A673 (cell line): ENCODE measurements at regions of chr15 and their contacts with region 1.

Region 1: DNA sequence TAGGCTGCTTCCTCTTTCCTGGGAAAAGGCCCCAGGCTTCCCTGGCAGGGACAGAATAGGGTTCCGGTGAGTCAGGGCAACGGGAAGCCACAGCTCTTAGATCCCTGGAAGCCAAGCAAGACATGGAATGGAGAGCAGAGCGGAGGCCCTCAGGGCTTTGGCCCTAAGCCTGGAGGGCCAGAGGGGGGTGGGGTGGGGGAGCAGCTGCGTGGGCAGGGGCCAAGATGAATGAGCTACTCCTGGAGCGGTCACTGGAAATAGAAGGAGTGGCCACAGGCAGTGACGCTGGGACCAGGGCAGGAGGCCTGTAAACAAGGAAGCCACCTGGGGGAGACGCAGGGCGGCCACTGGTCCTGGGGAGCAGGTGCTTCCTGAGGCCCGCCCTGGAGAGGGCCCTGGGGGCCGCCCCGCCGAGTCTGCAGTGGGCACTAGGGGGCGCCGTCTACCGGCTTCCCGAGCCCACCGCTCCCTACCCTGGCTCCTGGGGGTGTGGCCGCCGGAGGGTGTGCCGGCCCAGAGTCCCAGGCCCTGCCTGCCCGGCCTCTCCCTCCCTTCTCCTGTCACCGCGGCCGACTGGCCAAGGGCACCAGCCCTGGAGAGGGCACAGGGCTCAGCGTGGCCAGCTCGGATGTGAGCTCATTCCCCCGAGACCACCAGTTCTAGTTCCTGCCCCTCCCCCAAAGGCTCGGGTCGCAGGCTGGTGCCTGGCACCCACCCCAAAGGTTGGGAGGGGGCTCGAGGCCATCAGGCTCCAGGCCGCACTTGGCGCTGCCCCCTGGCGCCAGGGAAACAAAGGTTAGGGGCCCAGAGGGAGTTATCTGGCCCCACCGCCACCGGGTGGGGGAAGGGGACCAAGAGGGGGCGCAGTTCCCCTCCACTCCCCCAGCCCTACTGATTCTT is 12.1 kb downstream of the VPS18 start:
- DNase-seq: peak; percentile 83
- H3K4me3 ChIP-seq: peak overlapping the region; percentile 58
- H3K27ac ChIP-seq: peak overlapping the region; percentile 57
- H3K4me1 ChIP-seq: peaks cover 21% of the 10 kb centered on the region
- H3K27me3 ChIP-seq: no peaks in the 10 kb centered on the region
- CTCF ChIP-seq: peak; percentile 86

Region 2: GRCh38 chr15:40564591-40565332 is 341.6 kb before region 1 on chr15 and contains the start of gene CCDC32:
- CTCF ChIA-PET with region 1: no interaction called
- POLR2A ChIA-PET with region 1: no interaction called
- intact Hi-C with region 1: no loop called
- DNase-seq: peak; percentile 100
- H3K4me3 ChIP-seq: peak within 1 kb of the TSS; percentile 79
- H3K27ac ChIP-seq: peak within 1 kb of the TSS; percentile 83
- H3K4me1 ChIP-seq: peaks cover 10% of the 10 kb centered on the region
- H3K27me3 ChIP-seq: no peaks in the 10 kb centered on the region
- CTCF ChIP-seq: no peak
- total RNA-seq, gene CCDC32: 10.4 and 11.7 TPM in 2 replicates

Region 3: GRCh38 chr15:40893733-40894688 is 12.3 kb before region 1 on chr15 and contains the start of gene VPS18:
- CTCF ChIA-PET with region 1: interaction called, 12 read pairs
- POLR2A ChIA-PET with region 1: no interaction called
- intact Hi-C with region 1: no loop called
- DNase-seq: peak; percentile 98
- H3K4me3 ChIP-seq: peak within 1 kb of the TSS; percentile 95
- H3K27ac ChIP-seq: peak within 1 kb of the TSS; percentile 79
- H3K4me1 ChIP-seq: peaks cover 6% of the 10 kb centered on the region
- H3K27me3 ChIP-seq: no peaks in the 10 kb centered on the region
- CTCF ChIP-seq: peak; percentile 87
- total RNA-seq, gene VPS18: 21.9 and 23.8 TPM in 2 replicates

Region 4: GRCh38 chr15:40930430-40931299 is 24.3 kb after region 1 on chr15:
- CTCF ChIA-PET with region 1: interaction called, 13 read pairs
- POLR2A ChIA-PET with region 1: no interaction called
- intact Hi-C with region 1: no loop called
- DNase-seq: no peak
- H3K4me3 ChIP-seq: peak overlapping the region; percentile 38
- H3K27ac ChIP-seq: no peak overlapping the region
- H3K4me1 ChIP-seq: peaks cover 48% of the 10 kb centered on the region
- H3K27me3 ChIP-seq: peaks cover 56% of the 10 kb centered on the region
- CTCF ChIP-seq: peak; percentile 71

Region 5: GRCh38 chr15:41022487-41023090 is 116.2 kb after region 1 on chr15:
- CTCF ChIA-PET with region 1: interaction called, 13 read pairs
- POLR2A ChIA-PET with region 1: no interaction called
- intact Hi-C with region 1: loop called (anchors 1 kb)
- DNase-seq: peak; percentile 61
- H3K4me3 ChIP-seq: no peak overlapping the region
- H3K27ac ChIP-seq: no peak overlapping the region
- H3K4me1 ChIP-seq: peaks cover 23% of the 10 kb centered on the region
- H3K27me3 ChIP-seq: no peaks in the 10 kb centered on the region
- CTCF ChIP-seq: peak; percentile 79

Region 6: DNA sequence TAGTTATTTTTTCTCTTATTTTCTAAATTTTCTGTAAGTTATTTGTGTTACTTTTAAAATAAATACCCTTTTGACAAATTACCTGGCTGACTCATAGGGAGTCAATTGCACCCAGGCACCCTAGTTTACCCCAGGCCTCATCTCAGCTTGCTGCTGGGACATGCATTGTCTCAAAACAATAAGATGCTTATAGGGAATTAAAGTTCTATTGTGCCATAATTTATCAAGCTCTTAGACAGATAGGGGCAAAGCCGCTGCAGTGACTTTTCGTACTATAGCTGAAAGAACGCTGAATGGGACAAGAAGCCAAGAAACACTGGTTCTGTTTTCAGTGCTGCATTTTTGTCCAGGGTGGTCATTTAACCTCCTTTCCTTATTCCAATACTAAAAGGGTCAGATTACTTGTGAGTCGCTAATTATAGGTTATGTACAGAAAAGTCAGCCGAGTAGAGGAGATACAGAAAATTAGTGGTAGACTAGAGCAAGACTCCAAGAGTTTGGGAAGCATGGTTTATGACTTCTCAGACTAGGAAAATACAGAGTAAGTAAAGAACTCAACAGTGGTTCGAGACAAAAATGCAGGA is 274.0 kb after region 1 on chr15:
- CTCF ChIA-PET with region 1: interaction called, 10 read pairs
- POLR2A ChIA-PET with region 1: no interaction called
- intact Hi-C with region 1: loop called (anchors 1 kb)
- DNase-seq: no peak
- H3K4me3 ChIP-seq: no peak overlapping the region
- H3K27ac ChIP-seq: no peak overlapping the region
- H3K4me1 ChIP-seq: no peaks in the 10 kb centered on the region
- H3K27me3 ChIP-seq: no peaks in the 10 kb centered on the region
- CTCF ChIP-seq: no peak

Region 7: GRCh38 chr15:41331833-41332787 is 425.8 kb after region 1 on chr15 and contains the start of gene OIP5:
- CTCF ChIA-PET with region 1: interaction called, 3 read pairs
- POLR2A ChIA-PET with region 1: no interaction called
- intact Hi-C with region 1: loop called (anchors 5 kb)
- DNase-seq: peak; percentile 100
- H3K4me3 ChIP-seq: peak within 1 kb of the TSS; percentile 78
- H3K27ac ChIP-seq: peak within 1 kb of the TSS; percentile 91
- H3K4me1 ChIP-seq: peaks cover 10% of the 10 kb centered on the region
- H3K27me3 ChIP-seq: no peaks in the 10 kb centered on the region
- CTCF ChIP-seq: peak; percentile 63
- total RNA-seq, gene OIP5: 31.0 and 36.1 TPM in 2 replicates

Region 8: GRCh38 chr15:41512940-41513510 is 606.7 kb after region 1 on chr15:
- CTCF ChIA-PET with region 1: no interaction called
- POLR2A ChIA-PET with region 1: no interaction called
- intact Hi-C with region 1: no loop called
- DNase-seq: peak; percentile 73
- H3K4me3 ChIP-seq: peak overlapping the region; percentile 59
- H3K27ac ChIP-seq: no peak overlapping the region
- H3K4me1 ChIP-seq: peaks cover 20% of the 10 kb centered on the region
- H3K27me3 ChIP-seq: peaks cover 11% of the 10 kb centered on the region
- CTCF ChIP-seq: no peak